ENCODE measurements at regions of chr15 and their contacts with region 1.

Region 1: GRCh38 chr15:67024314-67024997 is 40.9 kb upstream of the SMAD3 start:
- H3K4me3 Mint-ChIP-seq: peak overlapping the region; percentile 28
- H3K27ac Mint-ChIP-seq: peak overlapping the region; percentile 90
- H3K4me1 Mint-ChIP-seq: peaks cover 69% of the 10 kb centered on the region
- H3K27me3 Mint-ChIP-seq: peaks cover 29% of the 10 kb centered on the region

Region 2: GRCh38 chr15:66966257-66966656 is 58.2 kb before region 1 on chr15:
- intact Hi-C with region 1: loop called (anchors 10 kb)
- H3K4me3 Mint-ChIP-seq: no peak overlapping the region
- H3K27ac Mint-ChIP-seq: no peak overlapping the region
- H3K4me1 Mint-ChIP-seq: peaks cover 42% of the 10 kb centered on the region
- H3K27me3 Mint-ChIP-seq: peaks cover 42% of the 10 kb centered on the region

Region 3: GRCh38 chr15:67080900-67081431 is 56.5 kb after region 1 on chr15:
- intact Hi-C with region 1: loop called (anchors 5 kb)
- H3K4me3 Mint-ChIP-seq: peak overlapping the region; percentile 15
- H3K27ac Mint-ChIP-seq: peak overlapping the region; percentile 32
- H3K4me1 Mint-ChIP-seq: peaks cover 85% of the 10 kb centered on the region
- H3K27me3 Mint-ChIP-seq: peaks cover 11% of the 10 kb centered on the region

Measured in dendritic cell treated with granulocyte-macrophage colony-stimulating factor and Interleukin-4, amounts not matched to agents 40 ng/mL and 50 ng/mL, for 4 days (primary cell).